Activated naive CD4-positive, alpha-beta T cell treated with anti-CD3 and anti-CD28 coated beads for 36 hours (primary cell): ENCODE measurements at regions of chr9 and their contacts with region 1.

Region 1: GRCh38 chr9:98192503-98193335 is at the start of gene CORO2A:
- DNase-seq: peak; percentile 64
- H3K4me3 Mint-ChIP-seq: peak within 1 kb of the TSS; percentile 82
- H3K27ac Mint-ChIP-seq: peak within 1 kb of the TSS; percentile 56
- H3K4me1 Mint-ChIP-seq: peaks cover 27% of the 10 kb centered on the region
- H3K27me3 Mint-ChIP-seq: no peaks in the 10 kb centered on the region
- total RNA-seq, gene CORO2A: 8.1 to 8.2 TPM

Region 2: GRCh38 chr9:98101868-98102273 is 90.8 kb before region 1 on chr9:
- CTCF ChIA-PET with region 1: no interaction called
- intact Hi-C with region 1: loop called (anchors 1 kb)
- DNase-seq: peak; percentile 90
- H3K4me3 Mint-ChIP-seq: peak overlapping the region; percentile 65
- H3K27ac Mint-ChIP-seq: peak overlapping the region; percentile 96
- H3K4me1 Mint-ChIP-seq: peaks cover 83% of the 10 kb centered on the region
- H3K27me3 Mint-ChIP-seq: no peaks in the 10 kb centered on the region

Region 3: GRCh38 chr9:98207606-98208005 is 14.9 kb after region 1 on chr9:
- CTCF ChIA-PET with region 1: interaction called, 15 read pairs
- intact Hi-C with region 1: no loop called
- DNase-seq: no peak
- H3K4me3 Mint-ChIP-seq: no peak overlapping the region
- H3K27ac Mint-ChIP-seq: no peak overlapping the region
- H3K4me1 Mint-ChIP-seq: peaks cover 2% of the 10 kb centered on the region
- H3K27me3 Mint-ChIP-seq: no peaks in the 10 kb centered on the region

Region 4: GRCh38 chr9:98607787-98608186 is 415.1 kb after region 1 on chr9:
- CTCF ChIA-PET with region 1: no interaction called
- intact Hi-C with region 1: no loop called
- DNase-seq: no peak
- H3K4me3 Mint-ChIP-seq: no peak overlapping the region
- H3K27ac Mint-ChIP-seq: no peak overlapping the region
- H3K4me1 Mint-ChIP-seq: no peaks in the 10 kb centered on the region
- H3K27me3 Mint-ChIP-seq: peaks cover 4% of the 10 kb centered on the region